Psoas muscle (tissue), 8 donors: ENCODE measurements at regions of chr10 and their contacts with region 1.

Region 1: GRCh38 chr10:104045151-104046089 is 40.3 kb downstream of the COL17A1 start:
- DNase-seq: no peak
- ATAC-seq: peak; percentile 62 to 85 (median 74)
- H3K4me3 ChIP-seq: no peak overlapping the region
- H3K27ac ChIP-seq: no peak overlapping the region
- H3K4me1 ChIP-seq: no peaks in the 10 kb centered on the region
- H3K27me3 ChIP-seq: peaks cover 0 to 2% (median 0%) of the 10 kb centered on the region in 3 donors
- CTCF ChIP-seq: peak; percentile 52

Region 2: GRCh38 chr10:104209575-104210198 is 164.3 kb after region 1 on chr10:
- intact Hi-C with region 1: loop called (anchors 5 kb)
- DNase-seq: no peak
- ATAC-seq: peak in 3 of 4 donors; percentile 51 to 90 (median 76)
- H3K4me3 ChIP-seq: no peak overlapping the region
- H3K27ac ChIP-seq: no peak overlapping the region
- H3K4me1 ChIP-seq: peaks cover 17% of the 10 kb centered on the region
- H3K27me3 ChIP-seq: no peaks in the 10 kb centered on the region
- CTCF ChIP-seq: peak; percentile 58